ENCODE measurements at regions of chr7 and their contacts with region 1.

Region 1: DNA sequence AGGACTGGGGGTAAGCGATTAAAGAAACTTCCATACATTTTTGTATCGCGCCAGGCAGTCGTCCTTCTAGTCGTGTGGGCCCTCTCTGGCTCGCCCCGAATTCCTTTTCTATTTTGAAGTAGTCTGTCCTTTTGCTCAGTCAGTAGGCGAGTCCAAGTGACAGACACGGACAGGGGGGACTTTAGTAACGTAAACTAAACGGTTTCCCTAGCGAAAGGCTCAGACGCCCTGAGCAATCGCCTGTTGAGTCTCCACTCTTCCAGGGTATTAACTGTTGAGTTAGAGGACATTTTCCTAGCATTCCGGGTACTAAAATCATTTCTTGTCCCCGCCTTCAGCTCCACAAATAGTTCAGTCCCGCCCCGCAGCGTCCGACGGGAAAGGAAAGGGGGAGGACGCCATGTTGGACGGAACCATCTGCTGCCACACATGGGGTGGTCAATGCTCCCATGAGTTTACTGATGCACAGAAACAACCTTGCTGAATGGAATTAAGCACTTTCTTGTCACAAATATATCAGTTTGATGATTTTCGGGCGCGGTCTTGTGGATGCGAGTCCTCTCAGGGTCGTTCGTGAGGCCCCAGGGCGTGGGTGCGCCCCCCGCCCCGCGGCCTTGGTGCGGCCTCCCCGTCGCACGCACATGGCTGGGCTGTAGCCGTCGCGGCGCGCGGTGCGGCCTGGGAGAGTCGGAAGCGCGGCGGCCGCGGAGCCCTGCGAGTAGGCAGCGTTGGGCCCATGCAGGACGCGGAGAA is at the start of gene EIF3B:
- DNase-seq: peak; percentile 80 to 97 (median 90)
- ATAC-seq: peak; percentile 84
- H3K4me3 ChIP-seq: peak within 1 kb of the TSS; percentile 72 to 74
- H3K4me3 Mint-ChIP-seq: peak within 1 kb of the TSS; percentile 88
- H3K27ac ChIP-seq: peak within 1 kb of the TSS; percentile 99
- H3K27ac Mint-ChIP-seq: peak within 1 kb of the TSS; percentile 99
- H3K4me1 ChIP-seq: peaks cover 45% of the 10 kb centered on the region
- H3K4me1 Mint-ChIP-seq: peaks cover 40% of the 10 kb centered on the region
- H3K27me3 ChIP-seq: no peaks in the 10 kb centered on the region
- H3K27me3 Mint-ChIP-seq: no peaks in the 10 kb centered on the region
- CTCF ChIP-seq: no peak
- total RNA-seq, gene EIF3B: 234 to 239 TPM

Region 2: GRCh38 chr7:1812509-1813393 is 541.6 kb before region 1 on chr7:
- CTCF ChIA-PET with region 1: no interaction called
- POLR2A ChIA-PET with region 1: no interaction called
- intact Hi-C with region 1: loop called (anchors 2 to 5 kb)
- DNase-seq: peak in 2 of 9 experiments; percentile 41 to 56
- ATAC-seq: no peak
- H3K4me3 ChIP-seq: no peak overlapping the region
- H3K4me3 Mint-ChIP-seq: no peak overlapping the region
- H3K27ac ChIP-seq: no peak overlapping the region
- H3K27ac Mint-ChIP-seq: no peak overlapping the region
- H3K4me1 ChIP-seq: no peaks in the 10 kb centered on the region
- H3K4me1 Mint-ChIP-seq: peaks cover 3% of the 10 kb centered on the region
- H3K27me3 ChIP-seq: no peaks in the 10 kb centered on the region
- H3K27me3 Mint-ChIP-seq: no peaks in the 10 kb centered on the region
- CTCF ChIP-seq: no peak

Region 3: GRCh38 chr7:2247141-2247995 is 107.0 kb before region 1 on chr7:
- CTCF ChIA-PET with region 1: no interaction called
- POLR2A ChIA-PET with region 1: interaction called, 5 read pairs
- intact Hi-C with region 1: loop called in 1 of 2 experiments (anchors 2 kb)
- DNase-seq: peak in 2 of 9 experiments; percentile 21 to 37
- ATAC-seq: no peak
- H3K4me3 ChIP-seq: no peak overlapping the region
- H3K4me3 Mint-ChIP-seq: no peak overlapping the region
- H3K27ac ChIP-seq: no peak overlapping the region
- H3K27ac Mint-ChIP-seq: no peak overlapping the region
- H3K4me1 ChIP-seq: peaks cover 18% of the 10 kb centered on the region
- H3K4me1 Mint-ChIP-seq: peaks cover 22% of the 10 kb centered on the region
- H3K27me3 ChIP-seq: no peaks in the 10 kb centered on the region
- H3K27me3 Mint-ChIP-seq: no peaks in the 10 kb centered on the region
- CTCF ChIP-seq: peak; percentile 41

Region 4: DNA sequence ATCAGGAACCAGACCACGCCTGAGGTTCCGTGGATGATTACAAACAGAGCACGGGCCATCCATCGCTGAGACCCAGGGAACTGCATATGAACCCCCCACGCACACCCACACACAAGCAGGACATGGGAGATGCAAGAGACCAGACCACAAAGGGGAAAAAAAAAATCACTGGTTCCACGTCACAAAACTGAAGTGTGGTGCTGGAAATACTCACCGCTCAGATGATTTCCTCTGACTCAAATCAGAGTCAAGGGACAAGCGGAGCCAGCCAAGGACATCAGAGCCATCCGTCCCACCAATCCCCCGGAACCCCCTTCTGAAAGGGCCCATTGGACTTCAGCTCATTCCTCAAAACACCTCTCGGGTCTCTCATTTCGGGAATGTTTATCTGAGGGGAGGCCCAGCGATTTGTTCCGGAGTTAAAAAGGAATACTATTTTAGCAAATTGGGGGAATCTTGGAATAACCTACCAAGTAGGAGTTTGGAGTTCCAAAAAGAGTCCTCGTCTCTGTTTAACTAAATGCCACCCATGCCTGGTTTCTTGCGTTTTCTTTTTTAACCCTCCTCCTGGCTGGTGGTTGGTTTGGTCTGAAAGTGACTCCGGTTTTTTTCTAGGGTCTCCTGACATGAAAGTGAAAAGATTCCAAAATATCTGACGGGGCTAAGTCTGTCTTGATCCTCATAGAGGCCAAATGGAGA is 55.1 kb before region 1 on chr7:
- CTCF ChIA-PET with region 1: no interaction called
- POLR2A ChIA-PET with region 1: no interaction called
- intact Hi-C with region 1: no loop called
- DNase-seq: peak in 1 of 9 experiments; percentile 26
- ATAC-seq: no peak
- H3K4me3 ChIP-seq: no peak overlapping the region
- H3K4me3 Mint-ChIP-seq: no peak overlapping the region
- H3K27ac ChIP-seq: no peak overlapping the region
- H3K27ac Mint-ChIP-seq: no peak overlapping the region
- H3K4me1 ChIP-seq: no peaks in the 10 kb centered on the region
- H3K4me1 Mint-ChIP-seq: peaks cover 5% of the 10 kb centered on the region
- H3K27me3 ChIP-seq: no peaks in the 10 kb centered on the region
- H3K27me3 Mint-ChIP-seq: no peaks in the 10 kb centered on the region
- CTCF ChIP-seq: no peak

Measured in CD8-positive, alpha-beta T cell (primary cell).